Left lung (tissue), 14 donors: ENCODE measurements at regions of chr11 and their contacts with region 1.

Region 1: GRCh38 chr11:65821116-65821515 is 12.6 kb upstream of the SNX32 start:
- DNase-seq: peak in 1 of 4 donors; percentile 17
- ATAC-seq: no peak
- H3K4me3 ChIP-seq: no peak overlapping the region
- H3K27ac ChIP-seq: no peak overlapping the region
- H3K4me1 ChIP-seq: peaks cover 0 to 14% of the 10 kb centered on the region in 2 donors
- H3K27me3 ChIP-seq: no peaks in the 10 kb centered on the region
- CTCF ChIP-seq: no peak

Region 2: DNA sequence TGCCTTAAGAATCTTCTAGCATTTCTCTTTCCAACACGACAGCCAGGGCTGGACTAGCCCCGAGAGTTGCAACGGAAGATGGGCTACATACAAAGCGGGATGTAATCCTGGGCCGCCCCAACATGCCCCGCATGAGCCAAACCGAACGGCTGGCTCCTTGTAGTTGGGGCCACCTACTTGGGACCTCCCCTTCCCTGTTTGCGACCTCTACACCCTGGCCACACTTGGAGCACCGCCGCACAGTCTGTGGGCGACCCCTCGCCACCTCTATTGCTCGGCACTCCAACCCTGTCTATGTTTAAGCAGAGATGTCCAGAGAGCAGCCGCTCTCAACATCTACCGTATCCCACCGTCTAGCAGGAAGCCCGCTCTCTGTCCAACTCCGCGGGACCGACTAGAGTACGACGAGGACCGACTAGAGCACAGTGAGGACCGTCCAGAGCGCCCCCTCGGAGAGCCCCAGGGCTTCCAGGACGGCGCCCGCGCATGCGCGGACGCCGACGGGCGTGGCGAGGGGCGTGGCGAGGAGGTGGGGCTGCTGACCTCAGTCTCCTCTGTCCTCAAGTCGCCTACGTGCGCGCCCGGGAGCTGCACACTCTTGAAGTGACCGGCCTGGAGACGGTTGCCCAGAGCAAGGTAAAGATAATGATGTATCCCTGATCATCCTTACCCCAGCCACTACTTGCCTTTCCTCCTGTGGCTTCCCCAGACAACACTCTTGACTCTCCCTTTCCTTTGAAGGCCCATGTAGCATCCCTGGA is 366.2 kb before region 1 on chr11:
- intact Hi-C with region 1: no loop called
- DNase-seq: peak; percentile 88 to 98 (median 95)
- ATAC-seq: peak; percentile 96
- H3K4me3 ChIP-seq: peak overlapping the region; percentile 46 to 47
- H3K27ac ChIP-seq: peak overlapping the region; percentile 72 to 91
- H3K4me1 ChIP-seq: peaks cover 9 to 31% of the 10 kb centered on the region in 2 donors
- H3K27me3 ChIP-seq: no peaks in the 10 kb centered on the region
- CTCF ChIP-seq: no peak

Region 3: DNA sequence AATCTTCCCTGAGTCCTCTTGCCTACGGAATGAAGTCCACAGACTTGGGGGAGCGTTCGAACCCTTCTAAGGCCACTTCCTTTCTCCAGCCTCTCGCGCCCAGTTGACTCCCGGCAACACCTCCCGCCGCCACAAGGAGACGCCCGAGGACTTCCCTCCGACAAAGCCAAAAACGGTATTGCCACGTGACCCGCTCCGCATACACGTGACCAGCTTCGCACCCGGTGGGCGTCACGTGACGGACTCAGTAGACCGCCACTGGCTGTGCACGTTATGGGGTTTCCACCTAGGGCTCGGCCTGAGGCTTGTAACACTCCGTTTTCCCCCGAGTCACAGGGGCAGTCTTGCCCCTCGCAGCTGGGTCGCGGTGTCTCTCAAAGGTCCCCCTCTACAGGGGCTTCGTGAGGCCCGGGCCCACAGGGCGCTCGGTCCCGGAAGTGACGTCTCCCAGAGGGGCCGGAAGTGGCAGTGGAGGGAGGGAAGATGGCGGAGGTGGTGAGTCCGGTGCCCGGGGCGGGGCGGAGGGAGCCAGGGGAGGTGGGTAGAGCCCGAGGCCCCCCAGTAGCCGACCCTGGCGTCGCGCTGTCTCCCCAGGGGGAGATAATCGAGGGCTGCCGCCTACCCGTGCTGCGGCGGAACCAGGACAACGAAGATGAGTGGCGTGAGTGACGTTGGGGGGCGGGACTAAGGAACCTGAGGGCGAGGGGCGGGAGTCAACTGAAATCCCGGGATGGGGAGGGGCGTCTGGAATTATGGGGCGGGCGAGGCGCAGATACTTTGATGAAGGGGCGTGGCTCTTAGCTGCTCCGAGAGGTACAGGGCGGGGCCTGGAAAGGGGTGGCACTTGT is 109.1 kb before region 1 on chr11 and contains the start of gene KAT5:
- intact Hi-C with region 1: loop called in 1 of 2 experiments (anchors 10 kb)
- DNase-seq: peak; percentile 99
- ATAC-seq: peak; percentile 89
- H3K4me3 ChIP-seq: peak within 1 kb of the TSS; percentile 54 to 74
- H3K27ac ChIP-seq: peak within 1 kb of the TSS; percentile 98 to 100
- H3K4me1 ChIP-seq: peaks cover 9 to 26% of the 10 kb centered on the region in 2 donors
- H3K27me3 ChIP-seq: no peaks in the 10 kb centered on the region
- CTCF ChIP-seq: peak; percentile 96
- polyA plus RNA-seq, gene KAT5: 58.4 to 69.2 (median 64.5) TPM